Right cardiac atrium (tissue), 5 donors: ENCODE measurements at regions of chr3 and their contacts with region 1.

Region 1: DNA sequence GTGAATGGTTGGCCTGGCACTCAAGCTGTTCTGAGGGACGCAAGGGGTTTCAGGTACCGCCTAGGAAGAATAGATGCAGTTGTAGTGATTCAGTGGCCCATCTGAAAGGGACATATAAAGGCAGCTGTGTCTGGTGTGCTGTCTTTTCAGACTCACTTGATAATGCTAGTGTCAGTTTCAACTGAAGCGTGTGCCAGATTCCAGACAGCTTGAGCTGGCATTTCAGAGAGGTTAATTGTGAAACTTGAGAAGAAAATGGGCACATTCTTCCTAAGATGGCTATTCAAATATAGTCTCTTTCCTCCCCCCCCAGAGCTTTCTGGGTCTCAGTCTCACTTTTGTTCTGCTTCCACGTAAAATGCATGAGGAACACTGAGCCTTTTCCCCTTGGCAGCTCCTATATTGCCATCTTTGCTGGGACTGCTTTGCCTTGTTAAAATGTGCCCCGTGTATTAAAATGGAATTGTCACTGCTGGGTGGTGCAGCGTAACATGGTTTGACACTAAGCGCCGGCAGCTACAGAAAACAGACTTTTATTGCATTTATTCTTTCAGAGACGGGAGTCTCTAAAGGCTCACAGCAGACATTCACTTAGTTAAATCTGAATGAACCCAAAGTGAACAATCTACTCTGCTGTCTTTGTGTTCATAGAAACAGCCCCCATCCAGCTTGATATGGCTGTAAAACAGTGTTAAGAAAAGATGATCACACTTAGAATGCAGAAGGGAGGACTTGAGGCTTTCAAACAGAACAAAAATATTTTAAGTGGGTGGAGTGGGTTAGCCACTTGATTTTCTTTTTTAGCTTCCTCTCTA is 478.7 kb downstream of the RBMS3 start:
- DNase-seq: peak; percentile 28 to 47 (median 39)
- ATAC-seq: peak; percentile 71 to 72
- H3K4me3 ChIP-seq: peak overlapping the region; percentile 33
- H3K27ac ChIP-seq: peak overlapping the region; percentile 98
- H3K4me1 ChIP-seq: peaks cover 6% of the 10 kb centered on the region
- H3K27me3 ChIP-seq: no peaks in the 10 kb centered on the region

Region 2: GRCh38 chr3:29440413-29441305 is 319.0 kb before region 1 on chr3:
- intact Hi-C with region 1: no loop called
- DNase-seq: peak in 2 of 3 donors; percentile 20 to 53
- ATAC-seq: peak; percentile 75 to 88
- H3K4me3 ChIP-seq: peak overlapping the region; percentile 62
- H3K27ac ChIP-seq: peak overlapping the region; percentile 13
- H3K4me1 ChIP-seq: no peaks in the 10 kb centered on the region
- H3K27me3 ChIP-seq: no peaks in the 10 kb centered on the region

Region 3: DNA sequence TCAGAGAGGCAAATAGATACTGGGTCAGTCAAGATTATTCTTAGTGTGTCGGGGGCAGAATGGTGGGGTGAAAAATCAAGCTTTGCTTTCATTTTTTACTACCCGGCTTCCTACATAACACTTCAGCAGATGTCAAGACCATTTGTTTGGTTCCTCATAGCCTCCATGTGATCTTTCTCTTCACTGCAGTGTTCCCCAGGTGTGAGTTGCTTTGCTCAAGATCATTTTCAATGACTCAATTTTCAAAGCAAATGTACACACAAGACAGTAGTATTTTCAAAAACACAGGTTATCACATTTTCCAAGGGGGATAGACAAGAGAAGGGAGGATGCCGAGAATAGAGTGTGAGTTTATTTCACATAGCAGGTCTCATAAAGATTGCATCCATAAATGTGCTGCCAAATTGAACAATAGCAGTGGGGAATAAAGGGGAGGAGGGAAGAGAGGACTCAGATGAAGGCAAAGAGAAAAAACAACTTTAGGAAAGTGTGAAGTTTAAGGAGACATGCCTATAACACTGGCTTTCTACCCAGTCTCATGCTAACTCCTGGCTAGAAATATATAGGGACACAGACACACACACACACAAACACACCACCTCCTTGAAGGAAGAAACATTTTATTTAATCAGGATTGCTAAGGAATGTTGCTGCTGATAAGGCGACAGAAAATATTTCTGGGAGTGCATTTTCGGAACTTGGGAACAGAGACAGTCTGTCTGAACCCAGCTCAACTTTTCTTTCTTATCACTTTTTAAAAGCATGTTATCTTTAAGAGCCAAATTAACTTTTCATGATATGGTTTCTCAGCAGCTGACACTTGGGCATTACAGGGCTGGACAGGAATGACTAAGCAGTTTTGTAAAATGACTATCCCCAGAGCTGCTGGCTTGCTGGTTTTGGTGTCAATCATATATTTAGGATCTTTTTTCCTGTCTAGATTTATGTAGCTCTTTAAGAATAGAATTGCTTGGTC is 76.3 kb before region 1 on chr3:
- intact Hi-C with region 1: loop called in 1 of 4 experiments (anchors 10 kb)
- DNase-seq: no peak
- ATAC-seq: peak; percentile 82 to 92
- H3K4me3 ChIP-seq: no peak overlapping the region
- H3K27ac ChIP-seq: peak overlapping the region; percentile 53
- H3K4me1 ChIP-seq: no peaks in the 10 kb centered on the region
- H3K27me3 ChIP-seq: no peaks in the 10 kb centered on the region

Region 4: GRCh38 chr3:29693863-29694262 is 65.8 kb before region 1 on chr3:
- intact Hi-C with region 1: loop called in 3 of 4 experiments (anchors 10 kb)
- DNase-seq: no peak
- ATAC-seq: no peak
- H3K4me3 ChIP-seq: no peak overlapping the region
- H3K27ac ChIP-seq: peak overlapping the region; percentile 83
- H3K4me1 ChIP-seq: peaks cover 6% of the 10 kb centered on the region
- H3K27me3 ChIP-seq: no peaks in the 10 kb centered on the region